Naive thymus-derived CD8-positive, alpha-beta T cell (primary cell): ENCODE measurements at regions of chr6 and their contacts with region 1.

Region 1: DNA sequence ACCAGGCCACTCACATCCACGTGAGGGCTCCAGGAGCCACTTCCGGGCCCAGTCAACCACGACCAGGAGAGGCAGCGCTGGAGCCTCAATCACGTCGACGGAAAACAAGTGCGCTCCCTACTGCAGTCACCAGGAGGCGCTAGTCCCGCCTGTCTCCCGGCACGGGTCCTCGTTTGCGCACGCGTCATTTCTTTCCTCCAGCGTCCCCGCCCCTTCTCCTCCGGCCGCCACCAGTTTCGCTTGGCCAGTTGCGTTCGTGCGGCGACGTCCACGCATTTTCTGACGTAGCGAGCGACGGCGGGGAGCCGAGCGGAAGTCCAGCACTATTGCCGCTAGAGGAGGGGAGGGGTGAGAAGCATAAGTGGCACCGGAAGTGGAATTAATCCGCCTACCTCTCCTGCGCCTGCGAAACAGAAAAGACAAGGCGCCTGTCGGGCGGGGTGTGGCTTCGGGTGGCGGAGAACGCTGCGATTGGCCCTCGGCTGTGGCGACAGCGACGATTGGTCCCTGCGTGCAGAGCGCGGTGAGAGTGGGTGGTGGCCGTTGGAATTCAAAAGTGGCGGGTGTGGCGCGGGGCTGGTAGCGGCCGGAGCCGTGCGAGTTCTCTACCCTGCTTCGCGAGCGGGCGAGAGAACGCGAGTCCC is at the start of gene KIFC1:
- DNase-seq: peak; percentile 95 to 100 (median 99)
- ATAC-seq: peak; percentile 92 to 97
- H3K4me3 Mint-ChIP-seq: peak within 1 kb of the TSS; percentile 72 to 90 (median 86)
- H3K27ac Mint-ChIP-seq: peak within 1 kb of the TSS; percentile 90 to 98 (median 98)
- H3K4me1 Mint-ChIP-seq: peaks cover 9 to 27% (median 23%) of the 10 kb centered on the region in 4 donors
- H3K27me3 Mint-ChIP-seq: no peaks in the 10 kb centered on the region
- polyA plus RNA-seq, gene KIFC1: 0.26 to 0.46 TPM in 2 of 3 donors, not detected in the other

Region 2: GRCh38 chr6:33410050-33410710 is 18.8 kb after region 1 on chr6:
- POLR2A ChIA-PET with region 1: interaction called, 12 read pairs
- DNase-seq: peak; percentile 94 to 99 (median 96)
- ATAC-seq: peak; percentile 72 to 83
- H3K4me3 Mint-ChIP-seq: peak overlapping the region; percentile 74 to 96 (median 90)
- H3K27ac Mint-ChIP-seq: peak overlapping the region; percentile 63 to 99 (median 98)
- H3K4me1 Mint-ChIP-seq: peaks cover 20 to 53% (median 44%) of the 10 kb centered on the region in 4 donors
- H3K27me3 Mint-ChIP-seq: no peaks in the 10 kb centered on the region

Region 3: DNA sequence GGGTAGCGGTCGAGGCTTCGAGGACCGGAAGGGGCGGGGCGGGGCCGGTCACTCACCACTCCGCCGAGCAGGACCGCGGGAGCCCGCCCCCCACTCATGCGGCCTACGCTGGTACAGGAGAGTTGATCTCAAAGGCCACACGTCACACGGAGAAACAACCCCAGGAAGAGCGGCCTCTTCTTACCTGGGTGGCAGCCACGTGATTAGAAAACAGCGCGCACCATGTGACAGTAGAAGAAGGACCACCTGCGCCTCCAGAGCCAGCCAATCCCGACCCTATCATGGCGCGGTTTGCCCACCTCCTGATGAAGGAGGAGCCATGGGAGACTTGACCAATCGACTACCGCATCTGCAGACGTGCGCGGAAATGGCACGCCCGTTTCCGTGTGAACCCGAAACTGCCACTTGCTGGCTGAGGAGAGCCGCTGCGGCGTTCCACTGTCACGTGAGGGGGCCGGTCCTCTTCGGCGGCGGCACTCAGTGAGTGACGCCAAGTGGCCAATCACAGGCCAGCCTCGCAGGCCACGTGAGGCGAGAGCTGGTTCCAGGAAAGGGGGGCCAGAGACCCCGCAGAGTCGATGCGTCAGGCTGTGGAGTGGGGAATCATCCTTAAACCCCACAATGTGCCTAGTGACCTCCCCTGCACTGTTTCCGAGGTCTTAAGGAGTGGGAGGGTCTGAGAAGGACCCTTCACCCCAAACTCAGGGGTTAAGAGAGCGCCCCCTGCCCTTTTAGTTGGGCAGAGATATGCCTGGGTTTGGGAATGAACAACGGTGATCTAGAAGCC is 26.7 kb after region 1 on chr6 and contains the start of gene CUTA:
- POLR2A ChIA-PET with region 1: interaction called, 14 read pairs
- DNase-seq: peak; percentile 93 to 100 (median 99)
- ATAC-seq: peak; percentile 90
- H3K4me3 Mint-ChIP-seq: peak within 1 kb of the TSS; percentile 90 to 95 (median 92)
- H3K27ac Mint-ChIP-seq: peak within 1 kb of the TSS; percentile 98 to 100 (median 99)
- H3K4me1 Mint-ChIP-seq: peaks cover 49 to 94% (median 80%) of the 10 kb centered on the region in 4 donors
- H3K27me3 Mint-ChIP-seq: no peaks in the 10 kb centered on the region
- polyA plus RNA-seq, gene CUTA: 338 to 441 (median 385) TPM

Region 4: GRCh38 chr6:33425668-33426577 is 34.5 kb after region 1 on chr6:
- POLR2A ChIA-PET with region 1: interaction called, 13 read pairs
- DNase-seq: peak; percentile 70 to 94 (median 80)
- ATAC-seq: peak; percentile 54 to 57
- H3K4me3 Mint-ChIP-seq: peak overlapping the region; percentile 87 to 97 (median 91)
- H3K27ac Mint-ChIP-seq: peak overlapping the region; percentile 93 to 99 (median 99)
- H3K4me1 Mint-ChIP-seq: peaks cover 61 to 90% (median 79%) of the 10 kb centered on the region in 4 donors
- H3K27me3 Mint-ChIP-seq: no peaks in the 10 kb centered on the region

Region 5: DNA sequence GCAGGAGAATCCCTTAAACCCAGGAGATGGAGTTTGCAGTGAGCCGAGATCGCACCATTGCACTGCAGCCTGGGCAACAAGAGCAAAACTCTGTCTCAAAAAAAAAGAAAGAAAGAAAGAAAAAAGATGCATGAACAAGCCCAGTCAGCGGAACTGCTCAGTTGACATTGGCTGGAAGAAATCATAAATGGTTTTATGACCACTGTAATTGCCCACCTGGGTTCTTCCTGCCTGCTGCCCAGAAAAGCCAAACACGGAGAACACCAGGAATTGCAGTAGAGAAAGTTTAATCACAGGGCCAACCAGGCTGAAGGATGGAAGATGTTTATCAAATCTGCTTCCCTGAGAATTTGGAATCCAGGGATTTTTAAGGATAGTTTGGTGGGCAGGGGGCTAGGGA is 166.0 kb after region 1 on chr6:
- POLR2A ChIA-PET with region 1: no interaction called
- DNase-seq: no peak
- ATAC-seq: no peak
- H3K4me3 Mint-ChIP-seq: no peak overlapping the region
- H3K27ac Mint-ChIP-seq: no peak overlapping the region
- H3K4me1 Mint-ChIP-seq: no peaks in the 10 kb centered on the region
- H3K27me3 Mint-ChIP-seq: no peaks in the 10 kb centered on the region